ENCODE measurements at regions of chr7 and their contacts with region 1.

Region 1: GRCh38 chr7:27784393-27785053 is 44.6 kb downstream of the TAX1BP1 start:
- DNase-seq: peak; percentile 43 to 71 (median 52)
- ATAC-seq: peak; percentile 89
- H3K4me3 ChIP-seq: no peak overlapping the region
- H3K27ac ChIP-seq: peak overlapping the region; percentile 43; the same call in 2 of the 3 replicates
- H3K4me1 ChIP-seq: no peaks in the 10 kb centered on the region; a peak in 1 of 5 replicates
- H3K27me3 ChIP-seq: no peaks in the 10 kb centered on the region
- CTCF ChIP-seq: peak; percentile 41 to 64 (median 56); a peak in 5 of 6 replicates
- EP300 ChIP-seq: peak; percentile 34; the same call in 1 of the 2 replicates
- POLR2A ChIP-seq: no peak
- RAD21 ChIP-seq: peak; percentile 35 to 55; a peak in 3 of 4 replicates

Region 2: GRCh38 chr7:27745064-27745583 is 39.4 kb before region 1 on chr7:
- CTCF ChIA-PET with region 1: no interaction called
- POLR2A ChIA-PET with region 1: no interaction called
- in situ Hi-C with region 1: no loop called
- intact Hi-C with region 1: loop called (anchors 5 kb)
- DNase-seq: peak in 2 of 4 experiments; percentile 56 to 80
- ATAC-seq: peak; percentile 71
- H3K4me3 ChIP-seq: no peak overlapping the region
- H3K27ac ChIP-seq: peak overlapping the region; percentile 74
- H3K4me1 ChIP-seq: peaks cover 3 to 17% of the 10 kb centered on the region in 2 experiments; a peak in 3 of 5 replicates
- H3K27me3 ChIP-seq: no peaks in the 10 kb centered on the region
- CTCF ChIP-seq: peak; percentile 58 to 77 (median 61)
- EP300 ChIP-seq: peak; percentile 31; the same call in 1 of the 2 replicates
- POLR2A ChIP-seq: no peak
- RAD21 ChIP-seq: peak; percentile 58 to 71

Region 3: DNA sequence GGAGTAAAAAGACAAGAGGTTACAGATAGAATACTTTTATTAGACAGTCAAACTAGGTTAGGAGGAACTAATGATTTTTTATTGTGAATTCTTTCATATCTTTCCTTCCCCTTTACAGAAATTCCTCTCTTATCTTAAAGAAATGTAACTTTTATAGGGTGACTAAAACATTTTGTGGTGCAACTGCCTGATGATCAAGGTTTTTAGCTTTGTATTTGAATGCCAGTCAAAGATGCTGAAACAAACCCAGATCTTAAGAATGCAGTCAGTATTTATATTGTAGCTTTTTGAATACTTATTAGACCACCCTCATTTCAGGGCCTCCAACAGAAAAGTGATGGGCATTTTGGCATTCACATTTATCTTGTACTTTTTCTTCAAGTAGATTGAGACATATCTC is 17.1 kb before region 1 on chr7:
- CTCF ChIA-PET with region 1: no interaction called
- POLR2A ChIA-PET with region 1: no interaction called
- in situ Hi-C with region 1: no loop called
- intact Hi-C with region 1: no loop called
- DNase-seq: no peak
- ATAC-seq: no peak
- H3K4me3 ChIP-seq: no peak overlapping the region
- H3K27ac ChIP-seq: no peak overlapping the region
- H3K4me1 ChIP-seq: no peaks in the 10 kb centered on the region
- H3K27me3 ChIP-seq: no peaks in the 10 kb centered on the region
- CTCF ChIP-seq: no peak
- EP300 ChIP-seq: no peak
- POLR2A ChIP-seq: no peak
- RAD21 ChIP-seq: no peak

Region 4: GRCh38 chr7:28020302-28020940 is 235.9 kb after region 1 on chr7:
- CTCF ChIA-PET with region 1: no interaction called
- POLR2A ChIA-PET with region 1: no interaction called
- in situ Hi-C with region 1: no loop called
- intact Hi-C with region 1: loop called (anchors 10 kb)
- DNase-seq: peak; percentile 75 to 78 (median 77)
- ATAC-seq: peak; percentile 97
- H3K4me3 ChIP-seq: no peak overlapping the region
- H3K27ac ChIP-seq: no peak overlapping the region
- H3K4me1 ChIP-seq: no peaks in the 10 kb centered on the region
- H3K27me3 ChIP-seq: peaks cover 18 to 30% of the 10 kb centered on the region in 2 experiments; a peak in 4 of 5 replicates
- CTCF ChIP-seq: peak; percentile 81 to 95 (median 89)
- EP300 ChIP-seq: no peak
- POLR2A ChIP-seq: no peak
- RAD21 ChIP-seq: peak; percentile 81 to 90

Measured in K562 (cell line).